ENCODE measurements at regions of chr12 and their contacts with region 1.

Region 1: GRCh38 chr12:12216349-12217017 is 50.4 kb downstream of the LRP6 start:
- DNase-seq: peak; percentile 41 to 92
- ATAC-seq: peak; percentile 74
- H3K4me3 ChIP-seq: peak overlapping the region; percentile 27
- H3K27ac ChIP-seq: peak overlapping the region; percentile 89 to 98
- H3K4me1 ChIP-seq: peaks cover 89% of the 10 kb centered on the region
- CTCF ChIP-seq: no peak
- EP300 ChIP-seq: peak; percentile 17 to 50; a peak in 1 of 5 replicates
- POLR2A ChIP-seq: no peak
- RAD21 ChIP-seq: no peak; a peak in 1 of 5 replicates

Region 2: GRCh38 chr12:12046401-12046800 is 170.1 kb before region 1 on chr12:
- CTCF ChIA-PET with region 1: no interaction called
- POLR2A ChIA-PET with region 1: no interaction called
- DNase-seq: no peak
- ATAC-seq: no peak
- H3K4me3 ChIP-seq: no peak overlapping the region
- H3K27ac ChIP-seq: no peak overlapping the region
- H3K4me1 ChIP-seq: no peaks in the 10 kb centered on the region
- CTCF ChIP-seq: no peak
- EP300 ChIP-seq: no peak
- POLR2A ChIP-seq: no peak
- RAD21 ChIP-seq: no peak

Region 3: DNA sequence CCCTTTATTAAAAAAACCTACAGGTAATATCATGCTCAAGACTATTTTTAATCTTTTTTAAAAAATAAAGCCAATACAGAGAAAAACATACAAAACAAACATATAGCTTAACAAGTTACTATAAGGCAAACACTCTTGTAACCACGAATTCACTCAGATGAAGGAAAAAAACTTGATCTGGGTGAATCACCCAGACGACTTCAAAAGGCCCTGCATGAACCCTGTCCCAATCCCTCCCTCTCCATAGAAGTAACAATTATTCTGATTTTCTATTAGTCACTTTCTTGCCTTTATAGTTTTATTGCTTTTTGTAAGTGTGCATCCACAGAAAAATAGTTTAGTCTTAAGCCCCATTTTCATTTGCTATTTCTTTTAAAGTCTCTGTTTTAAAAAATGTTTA is 22.3 kb before region 1 on chr12:
- CTCF ChIA-PET with region 1: no interaction called
- POLR2A ChIA-PET with region 1: no interaction called
- DNase-seq: peak; percentile 14 to 28
- ATAC-seq: peak; percentile 70; a peak in 4 of 6 replicates
- H3K4me3 ChIP-seq: no peak overlapping the region
- H3K27ac ChIP-seq: no peak overlapping the region
- H3K4me1 ChIP-seq: peaks cover 27% of the 10 kb centered on the region
- CTCF ChIP-seq: no peak
- EP300 ChIP-seq: no peak
- POLR2A ChIP-seq: no peak
- RAD21 ChIP-seq: no peak

Region 4: GRCh38 chr12:12266873-12267741 is 50.6 kb after region 1 on chr12 and contains the start of gene LRP6:
- CTCF ChIA-PET with region 1: no interaction called
- POLR2A ChIA-PET with region 1: interaction called, 19 read pairs
- DNase-seq: peak; percentile 92 to 97
- ATAC-seq: peak; percentile 93 to 94
- H3K4me3 ChIP-seq: peak within 1 kb of the TSS; percentile 96
- H3K27ac ChIP-seq: peak within 1 kb of the TSS; percentile 99 to 100
- H3K4me1 ChIP-seq: peaks cover 27% of the 10 kb centered on the region
- CTCF ChIP-seq: no peak
- EP300 ChIP-seq: 0 out of 5 replicates have a peak, but pooled peaks of 1 of the 2 experiments have one; percentile 17
- POLR2A ChIP-seq: peak; percentile 91
- RAD21 ChIP-seq: peak in 1 of 2 experiments; percentile 31; a peak in 1 of 5 replicates
- polyA plus RNA-seq, gene LRP6: 50.3 and 63.0 TPM in 2 replicates

Region 5: GRCh38 chr12:12282761-12283425 is 66.4 kb after region 1 on chr12:
- CTCF ChIA-PET with region 1: interaction called, 3 read pairs
- POLR2A ChIA-PET with region 1: interaction called, 10 read pairs
- DNase-seq: no peak
- ATAC-seq: peak in 1 of 2 experiments; percentile 41; a peak in 3 of 6 replicates
- H3K4me3 ChIP-seq: no peak overlapping the region
- H3K27ac ChIP-seq: peak overlapping the region; percentile 37 to 62; a peak in 3 of 6 replicates
- H3K4me1 ChIP-seq: peaks cover 19% of the 10 kb centered on the region
- CTCF ChIP-seq: no peak
- EP300 ChIP-seq: no peak
- POLR2A ChIP-seq: no peak
- RAD21 ChIP-seq: no peak

Region 6: GRCh38 chr12:12927211-12928079 is 711.0 kb after region 1 on chr12:
- CTCF ChIA-PET with region 1: no interaction called
- POLR2A ChIA-PET with region 1: no interaction called
- DNase-seq: peak; percentile 93 to 96
- ATAC-seq: peak; percentile 75 to 81
- H3K4me3 ChIP-seq: peak overlapping the region; percentile 74
- H3K27ac ChIP-seq: peak overlapping the region; percentile 86 to 94
- H3K4me1 ChIP-seq: peaks cover 25% of the 10 kb centered on the region
- CTCF ChIP-seq: no peak
- EP300 ChIP-seq: no peak
- POLR2A ChIP-seq: peak; percentile 72
- RAD21 ChIP-seq: no peak

Measured in A549 (cell line).